Caco-2 (cell line): ENCODE measurements at regions of chr15 and their contacts with region 1.

Region 1: GRCh38 chr15:68053701-68054627 is at the start of gene PIAS1:
- DNase-seq: peak; percentile 97
- H3K4me3 ChIP-seq: peak within 1 kb of the TSS; percentile 89
- H3K4me3 Mint-ChIP-seq: peak within 1 kb of the TSS; percentile 84
- H3K27ac Mint-ChIP-seq: peak within 1 kb of the TSS; percentile 60
- H3K4me1 ChIP-seq: peaks cover 39% of the 10 kb centered on the region
- H3K4me1 Mint-ChIP-seq: peaks cover 31% of the 10 kb centered on the region
- H3K27me3 ChIP-seq: no peaks in the 10 kb centered on the region
- H3K27me3 Mint-ChIP-seq: no peaks in the 10 kb centered on the region
- CTCF ChIP-seq: peak in 1 of 2 experiments; percentile 12
- total RNA-seq, gene PIAS1: 43.1 and 48.0 TPM in 2 replicates

Region 2: GRCh38 chr15:67863442-67863987 is 190.4 kb before region 1 on chr15:
- CTCF ChIA-PET with region 1: interaction called, 4 read pairs
- POLR2A ChIA-PET with region 1: no interaction called
- intact Hi-C with region 1: loop called (anchors 1 kb)
- DNase-seq: peak; percentile 82 to 86
- H3K4me3 ChIP-seq: peak overlapping the region; percentile 45
- H3K4me3 Mint-ChIP-seq: peak overlapping the region; percentile 70
- H3K27ac Mint-ChIP-seq: peak overlapping the region; percentile 80
- H3K4me1 ChIP-seq: peaks cover 9% of the 10 kb centered on the region; the same call in 1 of the 2 replicates
- H3K4me1 Mint-ChIP-seq: peaks cover 15% of the 10 kb centered on the region
- H3K27me3 ChIP-seq: no peaks in the 10 kb centered on the region
- H3K27me3 Mint-ChIP-seq: no peaks in the 10 kb centered on the region
- CTCF ChIP-seq: peak; percentile 89 to 91

Region 3: DNA sequence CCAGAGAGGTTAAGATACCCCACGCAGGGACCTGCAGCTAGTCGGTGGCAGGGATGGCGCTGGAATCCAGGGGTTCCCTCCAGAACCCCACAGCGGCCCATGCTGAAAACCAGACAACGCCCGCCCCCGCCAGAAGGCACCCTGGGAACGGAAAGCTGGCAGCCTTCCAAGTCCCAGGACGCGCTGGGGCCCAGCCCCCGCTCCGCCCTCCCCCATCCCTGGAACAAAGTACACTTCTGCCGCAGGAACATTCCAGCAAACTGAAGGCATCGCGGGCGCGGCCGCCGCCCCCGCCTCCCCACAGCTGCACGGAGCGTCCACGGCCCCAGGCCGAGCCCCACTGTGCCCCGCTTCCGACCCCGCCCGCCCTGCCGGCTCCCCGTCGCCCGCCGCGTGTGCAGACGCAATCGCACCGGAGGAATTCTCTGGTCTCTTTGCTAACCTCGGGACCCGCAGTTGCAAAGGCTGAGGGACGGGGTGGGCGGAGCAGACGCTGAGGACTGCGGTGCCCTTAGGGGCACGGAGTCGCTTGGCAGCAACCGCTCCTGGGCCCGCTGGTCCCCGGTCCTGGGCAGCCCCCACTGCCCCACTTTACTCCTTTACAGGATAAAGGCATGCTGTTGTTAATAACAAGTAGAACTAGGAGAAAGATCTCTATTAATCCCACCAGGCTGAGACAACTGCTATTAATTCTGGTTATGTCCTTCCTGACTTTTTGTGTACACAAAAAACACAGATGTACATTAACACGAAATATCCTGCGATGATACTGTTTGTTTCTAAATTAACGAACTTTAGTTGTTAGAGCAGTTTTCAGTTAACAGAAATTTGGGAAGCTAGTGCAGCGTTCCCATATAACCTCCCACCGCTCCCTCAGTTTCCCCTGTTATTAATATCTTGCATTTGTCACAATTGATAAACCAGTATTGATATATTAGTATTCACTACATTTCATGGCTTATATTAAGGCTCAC is 169.2 kb before region 1 on chr15:
- CTCF ChIA-PET with region 1: no interaction called
- POLR2A ChIA-PET with region 1: interaction called, 6 read pairs
- intact Hi-C with region 1: loop called (anchors 1 kb)
- DNase-seq: peak; percentile 93 to 95
- H3K4me3 ChIP-seq: peak overlapping the region; percentile 32
- H3K4me3 Mint-ChIP-seq: peak overlapping the region; percentile 60
- H3K27ac Mint-ChIP-seq: peak overlapping the region; percentile 36
- H3K4me1 ChIP-seq: peaks cover 33% of the 10 kb centered on the region
- H3K4me1 Mint-ChIP-seq: peaks cover 35% of the 10 kb centered on the region
- H3K27me3 ChIP-seq: no peaks in the 10 kb centered on the region
- H3K27me3 Mint-ChIP-seq: no peaks in the 10 kb centered on the region
- CTCF ChIP-seq: peak in 1 of 2 experiments; percentile 12

Region 4: GRCh38 chr15:67967871-67968431 is 86.0 kb before region 1 on chr15:
- CTCF ChIA-PET with region 1: no interaction called
- POLR2A ChIA-PET with region 1: interaction called, 4 read pairs
- intact Hi-C with region 1: loop called (anchors 5 kb)
- DNase-seq: peak; percentile 75 to 82
- H3K4me3 ChIP-seq: peak overlapping the region; percentile 39
- H3K4me3 Mint-ChIP-seq: peak overlapping the region; percentile 75
- H3K27ac Mint-ChIP-seq: peak overlapping the region; percentile 85
- H3K4me1 ChIP-seq: peaks cover 21% of the 10 kb centered on the region
- H3K4me1 Mint-ChIP-seq: peaks cover 20% of the 10 kb centered on the region
- H3K27me3 ChIP-seq: no peaks in the 10 kb centered on the region
- H3K27me3 Mint-ChIP-seq: no peaks in the 10 kb centered on the region
- CTCF ChIP-seq: no peak

Region 5: GRCh38 chr15:68040144-68040543 is 13.8 kb before region 1 on chr15:
- CTCF ChIA-PET with region 1: no interaction called
- POLR2A ChIA-PET with region 1: no interaction called
- intact Hi-C with region 1: no loop called
- DNase-seq: no peak
- H3K4me3 ChIP-seq: no peak overlapping the region
- H3K4me3 Mint-ChIP-seq: no peak overlapping the region
- H3K27ac Mint-ChIP-seq: no peak overlapping the region
- H3K4me1 ChIP-seq: peaks cover 15% of the 10 kb centered on the region
- H3K4me1 Mint-ChIP-seq: peaks cover 9% of the 10 kb centered on the region
- H3K27me3 ChIP-seq: no peaks in the 10 kb centered on the region
- H3K27me3 Mint-ChIP-seq: no peaks in the 10 kb centered on the region
- CTCF ChIP-seq: no peak

Region 6: GRCh38 chr15:68126396-68126795 is 72.4 kb after region 1 on chr15:
- CTCF ChIA-PET with region 1: no interaction called
- POLR2A ChIA-PET with region 1: no interaction called
- intact Hi-C with region 1: no loop called
- DNase-seq: no peak
- H3K4me3 ChIP-seq: no peak overlapping the region
- H3K4me3 Mint-ChIP-seq: no peak overlapping the region
- H3K27ac Mint-ChIP-seq: no peak overlapping the region
- H3K4me1 ChIP-seq: no peaks in the 10 kb centered on the region
- H3K4me1 Mint-ChIP-seq: peaks cover 3% of the 10 kb centered on the region
- H3K27me3 ChIP-seq: no peaks in the 10 kb centered on the region
- H3K27me3 Mint-ChIP-seq: no peaks in the 10 kb centered on the region
- CTCF ChIP-seq: no peak

Region 7: GRCh38 chr15:68154923-68155559 is 101.1 kb after region 1 on chr15:
- CTCF ChIA-PET with region 1: interaction called, 6 read pairs
- POLR2A ChIA-PET with region 1: no interaction called
- intact Hi-C with region 1: loop called (anchors 5 kb)
- DNase-seq: peak in 1 of 2 experiments; percentile 61
- H3K4me3 ChIP-seq: no peak overlapping the region
- H3K4me3 Mint-ChIP-seq: no peak overlapping the region
- H3K27ac Mint-ChIP-seq: no peak overlapping the region
- H3K4me1 ChIP-seq: peaks cover 12% of the 10 kb centered on the region
- H3K4me1 Mint-ChIP-seq: peaks cover 8% of the 10 kb centered on the region
- H3K27me3 ChIP-seq: no peaks in the 10 kb centered on the region
- H3K27me3 Mint-ChIP-seq: no peaks in the 10 kb centered on the region
- CTCF ChIP-seq: peak; percentile 65 to 72

Region 8: GRCh38 chr15:68177742-68178141 is 123.8 kb after region 1 on chr15:
- CTCF ChIA-PET with region 1: no interaction called
- POLR2A ChIA-PET with region 1: no interaction called
- intact Hi-C with region 1: no loop called
- DNase-seq: no peak
- H3K4me3 ChIP-seq: no peak overlapping the region
- H3K4me3 Mint-ChIP-seq: no peak overlapping the region
- H3K27ac Mint-ChIP-seq: no peak overlapping the region
- H3K4me1 ChIP-seq: no peaks in the 10 kb centered on the region
- H3K4me1 Mint-ChIP-seq: no peaks in the 10 kb centered on the region
- H3K27me3 ChIP-seq: no peaks in the 10 kb centered on the region
- H3K27me3 Mint-ChIP-seq: no peaks in the 10 kb centered on the region
- CTCF ChIP-seq: no peak

Region 9: DNA sequence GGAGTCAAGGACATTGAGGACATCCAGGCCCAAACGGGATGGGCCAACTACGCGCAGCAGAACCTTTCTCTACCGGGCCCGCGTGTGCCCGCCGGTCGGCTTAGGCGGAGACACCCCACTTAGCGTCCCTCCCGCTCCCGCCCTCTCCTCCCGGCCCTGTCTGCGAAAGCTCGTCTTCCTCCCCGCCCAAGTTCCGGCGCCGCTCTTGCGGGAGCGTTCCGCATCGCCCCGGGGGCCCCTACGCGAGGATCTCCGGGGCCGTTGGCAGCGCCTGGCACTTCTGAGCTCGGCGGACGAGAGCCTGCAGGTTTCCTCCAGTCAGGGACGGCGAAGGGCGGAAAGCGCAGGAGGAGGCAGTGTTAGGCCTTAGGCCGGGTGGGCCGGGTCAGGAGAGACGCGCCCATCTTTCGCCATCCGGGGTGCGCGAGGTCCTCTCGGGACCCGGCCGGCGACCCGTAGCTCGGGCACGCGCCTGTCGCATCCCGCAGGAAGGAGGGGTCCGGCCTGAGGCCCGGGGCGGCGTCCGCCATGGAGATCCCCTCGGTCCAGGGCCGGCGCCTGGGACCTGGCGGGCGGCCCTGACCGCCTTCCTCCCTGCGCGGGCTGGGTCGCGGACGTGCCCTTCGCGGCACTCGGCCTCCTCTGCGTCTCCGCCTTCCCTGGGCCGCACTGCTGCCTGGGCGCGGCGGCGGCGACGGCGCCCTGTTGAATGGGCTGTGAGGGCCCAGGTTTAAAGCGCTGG is 223.8 kb after region 1 on chr15 and contains the start of gene FEM1B:
- CTCF ChIA-PET with region 1: no interaction called
- POLR2A ChIA-PET with region 1: no interaction called
- intact Hi-C with region 1: no loop called
- DNase-seq: peak; percentile 90 to 91
- H3K4me3 ChIP-seq: peak within 1 kb of the TSS; percentile 61
- H3K4me3 Mint-ChIP-seq: peak within 1 kb of the TSS; percentile 95
- H3K27ac Mint-ChIP-seq: peak within 1 kb of the TSS; percentile 93
- H3K4me1 ChIP-seq: peaks cover 45% of the 10 kb centered on the region
- H3K4me1 Mint-ChIP-seq: peaks cover 50% of the 10 kb centered on the region
- H3K27me3 ChIP-seq: no peaks in the 10 kb centered on the region
- H3K27me3 Mint-ChIP-seq: no peaks in the 10 kb centered on the region
- CTCF ChIP-seq: no peak
- total RNA-seq, gene FEM1B: 33.5 and 41.0 TPM in 2 replicates